ENCODE measurements at regions of chr7 and their contacts with region 1.

Region 1: GRCh38 chr7:38398725-38399321 is 125.4 kb upstream of the TARP start:
- DNase-seq: peak; percentile 41 to 54 (median 46)
- H3K4me3 ChIP-seq: no peak overlapping the region
- H3K4me3 Mint-ChIP-seq: no peak overlapping the region
- H3K27ac ChIP-seq: no peak overlapping the region
- H3K27ac Mint-ChIP-seq: no peak overlapping the region
- H3K4me1 ChIP-seq: no peaks in the 10 kb centered on the region
- H3K4me1 Mint-ChIP-seq: peaks cover 1 to 9% (median 7%) of the 10 kb centered on the region in 4 donors
- H3K27me3 ChIP-seq: no peaks in the 10 kb centered on the region
- H3K27me3 Mint-ChIP-seq: peaks cover 8 to 18% of the 10 kb centered on the region in 2 donors

Region 2: GRCh38 chr7:38541440-38541839 is 142.6 kb after region 1 on chr7:
- CTCF ChIA-PET with region 1: interaction called, 8 read pairs
- POLR2A ChIA-PET with region 1: no interaction called
- intact Hi-C with region 1: loop called (anchors 1 kb)
- DNase-seq: no peak
- H3K4me3 ChIP-seq: no peak overlapping the region
- H3K4me3 Mint-ChIP-seq: no peak overlapping the region
- H3K27ac ChIP-seq: no peak overlapping the region
- H3K27ac Mint-ChIP-seq: no peak overlapping the region
- H3K4me1 ChIP-seq: no peaks in the 10 kb centered on the region
- H3K4me1 Mint-ChIP-seq: no peaks in the 10 kb centered on the region
- H3K27me3 ChIP-seq: no peaks in the 10 kb centered on the region
- H3K27me3 Mint-ChIP-seq: peaks cover 1 to 5% of the 10 kb centered on the region in 2 donors

Region 3: GRCh38 chr7:38632403-38632802 is 233.6 kb after region 1 on chr7:
- CTCF ChIA-PET with region 1: interaction called, 4 read pairs
- POLR2A ChIA-PET with region 1: no interaction called
- intact Hi-C with region 1: loop called (anchors 1 kb)
- DNase-seq: no peak
- H3K4me3 ChIP-seq: no peak overlapping the region
- H3K4me3 Mint-ChIP-seq: no peak overlapping the region
- H3K27ac ChIP-seq: no peak overlapping the region
- H3K27ac Mint-ChIP-seq: no peak overlapping the region
- H3K4me1 ChIP-seq: no peaks in the 10 kb centered on the region
- H3K4me1 Mint-ChIP-seq: peaks cover 3 to 18% (median 9%) of the 10 kb centered on the region in 4 donors
- H3K27me3 ChIP-seq: peaks cover 10% of the 10 kb centered on the region
- H3K27me3 Mint-ChIP-seq: peaks cover 32 to 44% of the 10 kb centered on the region in 2 donors

Region 4: GRCh38 chr7:38660427-38661099 is 261.7 kb after region 1 on chr7:
- CTCF ChIA-PET with region 1: interaction called, 56 read pairs
- POLR2A ChIA-PET with region 1: interaction called, 3 read pairs
- intact Hi-C with region 1: loop called (anchors 1 kb)
- DNase-seq: peak in 4 of 5 donors; percentile 32 to 42 (median 34)
- H3K4me3 ChIP-seq: no peak overlapping the region
- H3K4me3 Mint-ChIP-seq: no peak overlapping the region
- H3K27ac ChIP-seq: no peak overlapping the region
- H3K27ac Mint-ChIP-seq: no peak overlapping the region
- H3K4me1 ChIP-seq: no peaks in the 10 kb centered on the region
- H3K4me1 Mint-ChIP-seq: no peaks in the 10 kb centered on the region
- H3K27me3 ChIP-seq: no peaks in the 10 kb centered on the region
- H3K27me3 Mint-ChIP-seq: peaks cover 20 to 23% of the 10 kb centered on the region in 2 donors

Region 5: GRCh38 chr7:38751416-38751815 is 352.6 kb after region 1 on chr7:
- CTCF ChIA-PET with region 1: no interaction called
- POLR2A ChIA-PET with region 1: no interaction called
- intact Hi-C with region 1: loop called (anchors 10 kb)
- DNase-seq: no peak
- H3K4me3 ChIP-seq: no peak overlapping the region
- H3K4me3 Mint-ChIP-seq: no peak overlapping the region
- H3K27ac ChIP-seq: no peak overlapping the region
- H3K27ac Mint-ChIP-seq: no peak overlapping the region
- H3K4me1 ChIP-seq: no peaks in the 10 kb centered on the region
- H3K4me1 Mint-ChIP-seq: no peaks in the 10 kb centered on the region
- H3K27me3 ChIP-seq: no peaks in the 10 kb centered on the region
- H3K27me3 Mint-ChIP-seq: no peaks in the 10 kb centered on the region

Region 6: DNA sequence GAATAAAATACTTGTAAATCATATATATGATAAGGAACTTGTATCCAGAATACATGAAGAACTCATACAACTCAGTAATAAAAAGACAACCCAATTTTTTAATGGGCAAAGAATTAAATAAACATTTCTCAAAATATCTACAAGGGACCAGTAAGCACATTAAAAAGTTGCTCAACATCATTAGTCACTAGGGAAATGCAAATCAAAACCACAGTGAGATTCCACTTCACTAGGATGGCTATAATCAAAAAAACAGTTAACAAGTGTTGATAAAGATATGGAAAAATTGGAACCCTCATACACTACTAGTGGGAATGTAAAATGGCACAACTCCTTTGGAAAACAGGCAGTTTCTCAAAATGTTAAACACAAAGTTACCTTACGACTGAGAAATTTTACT is 1127.1 kb after region 1 on chr7:
- CTCF ChIA-PET with region 1: interaction called, 11 read pairs
- POLR2A ChIA-PET with region 1: no interaction called
- intact Hi-C with region 1: no loop called
- DNase-seq: no peak
- H3K4me3 ChIP-seq: no peak overlapping the region
- H3K4me3 Mint-ChIP-seq: no peak overlapping the region
- H3K27ac ChIP-seq: no peak overlapping the region
- H3K27ac Mint-ChIP-seq: no peak overlapping the region
- H3K4me1 ChIP-seq: no peaks in the 10 kb centered on the region
- H3K4me1 Mint-ChIP-seq: no peaks in the 10 kb centered on the region
- H3K27me3 ChIP-seq: no peaks in the 10 kb centered on the region
- H3K27me3 Mint-ChIP-seq: peaks cover 12 to 22% of the 10 kb centered on the region in 2 donors